ENCODE measurements at regions of chr1 and their contacts with region 1.

Region 1: DNA sequence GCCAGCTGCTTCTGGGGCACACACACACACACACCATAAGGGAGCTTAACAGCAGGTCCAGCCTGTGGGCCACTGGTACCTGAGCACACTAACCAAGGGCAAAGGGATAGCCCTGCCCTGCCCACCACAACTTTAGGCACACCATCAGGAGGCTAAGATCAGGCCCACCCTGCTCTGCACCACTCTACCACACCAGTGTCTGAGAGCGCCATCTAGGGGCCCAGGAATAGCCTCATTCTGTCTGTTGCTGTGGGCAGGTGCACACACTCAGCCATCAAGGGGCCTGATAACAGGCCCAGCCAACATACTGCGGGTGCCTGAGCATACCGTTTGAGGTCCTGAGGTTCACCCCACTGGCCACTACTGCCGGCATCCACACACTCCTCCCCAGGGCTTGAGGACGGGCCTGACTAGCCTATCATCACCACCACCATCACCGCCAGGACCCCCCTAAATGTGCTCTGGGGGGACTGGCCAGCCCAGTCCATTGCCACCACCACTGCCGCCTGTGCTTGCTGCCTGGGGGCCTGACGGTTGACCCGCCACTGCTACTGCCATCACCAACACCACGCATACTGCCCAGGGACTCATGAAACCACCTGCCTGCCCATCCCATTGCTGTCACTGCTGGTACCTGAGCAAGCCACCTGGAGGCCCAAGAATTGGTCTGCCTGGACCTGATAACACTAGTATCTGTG is 31.3 kb downstream of the NSL1 start:
- DNase-seq: peak in 31 of 35 experiments; percentile 11 to 69 (median 40)
- ATAC-seq: peak in 3 of 4 experiments; percentile 38 to 64 (median 61)
- H3K4me3 ChIP-seq: no peak overlapping the region
- H3K4me3 Mint-ChIP-seq: no peak overlapping the region
- H3K27ac ChIP-seq: no peak overlapping the region
- H3K27ac Mint-ChIP-seq: no peak overlapping the region
- H3K4me1 ChIP-seq: peaks cover 0 to 8% of the 10 kb centered on the region in 2 experiments
- H3K4me1 Mint-ChIP-seq: peaks cover 22 to 32% (median 31%) of the 10 kb centered on the region in 3 donors
- H3K27me3 ChIP-seq: no peaks in the 10 kb centered on the region
- H3K27me3 Mint-ChIP-seq: no peaks in the 10 kb centered on the region

Region 2: DNA sequence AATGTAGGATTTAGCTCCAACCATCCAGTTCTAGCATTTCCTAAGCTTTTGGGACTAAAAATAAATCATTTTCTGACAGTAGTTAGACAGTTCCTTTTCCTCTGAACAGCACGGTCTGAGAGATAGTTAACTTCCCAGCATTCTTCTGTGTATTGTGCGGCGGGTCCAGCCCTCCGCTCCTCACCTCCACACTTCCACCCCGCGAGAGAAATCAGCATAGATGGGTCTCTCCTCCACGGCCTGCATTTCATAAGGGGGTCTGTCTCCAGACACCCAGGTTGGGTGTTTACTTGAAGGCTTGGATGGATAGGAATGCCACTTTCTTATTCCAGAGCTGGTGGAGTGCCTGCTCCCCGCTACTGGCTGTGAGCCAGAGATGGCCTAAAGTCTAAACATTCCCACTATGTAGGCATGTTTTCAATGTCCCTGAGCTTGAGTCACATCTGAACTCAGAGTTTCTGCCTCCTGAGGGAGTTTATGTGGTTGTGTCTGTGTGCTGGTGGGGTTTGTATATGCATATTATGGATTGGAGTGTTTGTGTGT is 513.0 kb before region 1 on chr1:
- CTCF ChIA-PET with region 1: no interaction called
- POLR2A ChIA-PET with region 1: no interaction called
- DNase-seq: no peak
- ATAC-seq: no peak
- H3K4me3 ChIP-seq: no peak overlapping the region
- H3K4me3 Mint-ChIP-seq: no peak overlapping the region
- H3K27ac ChIP-seq: no peak overlapping the region
- H3K27ac Mint-ChIP-seq: no peak overlapping the region
- H3K4me1 ChIP-seq: peaks cover 4 to 8% of the 10 kb centered on the region in 2 experiments
- H3K4me1 Mint-ChIP-seq: peaks cover 19 to 32% (median 27%) of the 10 kb centered on the region in 3 donors
- H3K27me3 ChIP-seq: no peaks in the 10 kb centered on the region
- H3K27me3 Mint-ChIP-seq: peaks cover 0 to 8% of the 10 kb centered on the region in 2 donors

Region 3: DNA sequence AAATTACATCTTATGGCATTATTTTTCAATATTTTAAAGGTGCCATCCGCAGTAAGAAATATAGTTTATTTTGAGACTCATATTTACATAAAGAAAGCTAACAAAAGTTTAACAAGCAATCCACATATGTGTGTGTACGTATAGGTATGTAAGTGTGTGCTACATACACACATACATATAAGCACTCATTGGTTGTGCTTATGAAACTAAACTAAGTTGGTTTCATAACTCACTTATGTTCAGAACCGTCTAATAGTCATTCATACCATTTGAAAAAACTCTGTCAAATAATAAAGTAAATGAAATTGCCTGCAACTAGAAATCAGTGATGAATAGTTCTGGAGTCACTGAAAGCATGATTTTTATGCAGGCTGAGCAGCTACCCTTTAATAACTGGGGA is 45.5 kb after region 1 on chr1:
- CTCF ChIA-PET with region 1: no interaction called
- POLR2A ChIA-PET with region 1: no interaction called
- DNase-seq: no peak
- ATAC-seq: no peak
- H3K4me3 ChIP-seq: no peak overlapping the region
- H3K4me3 Mint-ChIP-seq: no peak overlapping the region
- H3K27ac ChIP-seq: no peak overlapping the region
- H3K27ac Mint-ChIP-seq: no peak overlapping the region
- H3K4me1 ChIP-seq: no peaks in the 10 kb centered on the region
- H3K4me1 Mint-ChIP-seq: no peaks in the 10 kb centered on the region
- H3K27me3 ChIP-seq: no peaks in the 10 kb centered on the region
- H3K27me3 Mint-ChIP-seq: no peaks in the 10 kb centered on the region

Region 4: GRCh38 chr1:212899845-212900244 is 139.6 kb after region 1 on chr1:
- CTCF ChIA-PET with region 1: no interaction called
- POLR2A ChIA-PET with region 1: no interaction called
- DNase-seq: no peak
- ATAC-seq: no peak
- H3K4me3 ChIP-seq: no peak overlapping the region
- H3K4me3 Mint-ChIP-seq: no peak overlapping the region
- H3K27ac ChIP-seq: no peak overlapping the region
- H3K27ac Mint-ChIP-seq: no peak overlapping the region
- H3K4me1 ChIP-seq: no peaks in the 10 kb centered on the region
- H3K4me1 Mint-ChIP-seq: no peaks in the 10 kb centered on the region
- H3K27me3 ChIP-seq: no peaks in the 10 kb centered on the region
- H3K27me3 Mint-ChIP-seq: no peaks in the 10 kb centered on the region

Region 5: DNA sequence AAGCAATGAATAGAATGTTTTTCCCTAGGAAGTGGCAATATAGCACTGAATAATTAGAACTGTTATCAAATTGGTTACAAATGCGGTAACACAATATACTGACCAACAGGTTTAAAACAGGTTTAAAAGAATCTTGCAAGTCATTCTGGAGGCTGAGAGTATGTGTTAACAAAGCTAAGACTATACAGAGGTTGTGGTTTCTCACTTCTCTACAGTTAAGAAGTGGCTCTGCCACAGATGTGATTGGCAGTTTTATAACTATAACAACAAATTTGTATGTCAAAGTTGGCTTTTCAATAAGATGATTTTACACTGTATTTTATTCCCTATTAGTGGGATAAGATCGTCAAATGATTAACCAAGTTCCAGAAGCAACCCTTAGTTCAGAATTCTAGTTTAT is 248.3 kb after region 1 on chr1:
- CTCF ChIA-PET with region 1: no interaction called
- POLR2A ChIA-PET with region 1: interaction called in 1 of 2 experiments, 12 read pairs
- DNase-seq: peak in 1 of 35 experiments; percentile 19
- ATAC-seq: peak in 2 of 4 experiments; percentile 50 to 55
- H3K4me3 ChIP-seq: no peak overlapping the region
- H3K4me3 Mint-ChIP-seq: no peak overlapping the region
- H3K27ac ChIP-seq: no peak overlapping the region
- H3K27ac Mint-ChIP-seq: no peak overlapping the region
- H3K4me1 ChIP-seq: no peaks in the 10 kb centered on the region
- H3K4me1 Mint-ChIP-seq: peaks cover 36 to 40% (median 37%) of the 10 kb centered on the region in 3 donors
- H3K27me3 ChIP-seq: no peaks in the 10 kb centered on the region
- H3K27me3 Mint-ChIP-seq: no peaks in the 10 kb centered on the region